ENCODE measurements at regions of chr10 and their contacts with region 1.

Region 1: GRCh38 chr10:48444266-48444665 is 137.8 kb downstream of the MAPK8 start:
- DNase-seq: no peak
- ATAC-seq: peak; percentile 65
- H3K4me3 Mint-ChIP-seq: no peak overlapping the region
- H3K27ac Mint-ChIP-seq: peak overlapping the region; percentile 39
- H3K4me1 Mint-ChIP-seq: peaks cover 20% of the 10 kb centered on the region
- H3K27me3 Mint-ChIP-seq: no peaks in the 10 kb centered on the region
- CTCF ChIP-seq: 0 out of 2 replicates have a peak, but pooled peaks have one; percentile 17

Region 2: GRCh38 chr10:48384699-48384982 is 59.6 kb before region 1 on chr10:
- CTCF ChIA-PET with region 1: interaction called, 16 read pairs
- POLR2A ChIA-PET with region 1: no interaction called
- DNase-seq: no peak
- ATAC-seq: no peak
- H3K4me3 Mint-ChIP-seq: no peak overlapping the region
- H3K27ac Mint-ChIP-seq: peak overlapping the region; percentile 53; the same call in 1 of the 2 replicates
- H3K4me1 Mint-ChIP-seq: peaks cover 19% of the 10 kb centered on the region
- H3K27me3 Mint-ChIP-seq: no peaks in the 10 kb centered on the region; the same call in 1 of the 2 replicates
- CTCF ChIP-seq: no peak

Region 3: DNA sequence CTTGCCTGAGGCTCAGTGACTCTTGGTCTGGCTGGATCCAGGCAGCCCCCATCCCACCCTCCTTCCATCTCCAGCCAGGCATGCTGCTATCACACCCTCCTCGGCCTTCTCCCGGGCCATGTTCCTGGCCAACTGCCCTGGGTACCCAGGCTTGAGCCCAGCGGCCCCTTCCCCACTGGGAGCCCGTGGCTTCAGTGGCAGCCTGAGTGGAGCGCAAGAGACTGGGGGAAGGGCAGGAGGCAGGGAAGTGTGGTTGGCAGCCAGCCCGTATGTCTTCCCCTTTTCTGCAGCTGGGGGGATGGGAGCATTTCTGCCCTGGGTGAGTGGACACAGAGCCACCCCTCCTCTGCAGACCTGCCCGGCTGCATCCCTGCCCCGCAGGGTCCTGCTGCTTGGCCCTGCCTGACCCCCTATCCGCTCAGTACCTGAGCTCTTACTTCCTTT is 12.1 kb after region 1 on chr10:
- CTCF ChIA-PET with region 1: interaction called, 55 read pairs
- POLR2A ChIA-PET with region 1: no interaction called
- DNase-seq: no peak
- ATAC-seq: peak; percentile 23
- H3K4me3 Mint-ChIP-seq: no peak overlapping the region
- H3K27ac Mint-ChIP-seq: no peak overlapping the region
- H3K4me1 Mint-ChIP-seq: peaks cover 13% of the 10 kb centered on the region; the same call in 1 of the 2 replicates
- H3K27me3 Mint-ChIP-seq: no peaks in the 10 kb centered on the region
- CTCF ChIP-seq: no peak

Region 4: GRCh38 chr10:48470115-48470892 is 26.0 kb after region 1 on chr10:
- CTCF ChIA-PET with region 1: interaction called, 34 read pairs
- POLR2A ChIA-PET with region 1: no interaction called
- DNase-seq: no peak
- ATAC-seq: peak; percentile 69
- H3K4me3 Mint-ChIP-seq: no peak overlapping the region
- H3K27ac Mint-ChIP-seq: peak overlapping the region; percentile 23; the same call in 1 of the 2 replicates
- H3K4me1 Mint-ChIP-seq: peaks cover 40% of the 10 kb centered on the region
- H3K27me3 Mint-ChIP-seq: peaks cover 15% of the 10 kb centered on the region
- CTCF ChIP-seq: no peak

Region 5: GRCh38 chr10:48493083-48493871 is 49.0 kb after region 1 on chr10:
- CTCF ChIA-PET with region 1: interaction called, 13 read pairs
- POLR2A ChIA-PET with region 1: no interaction called
- DNase-seq: no peak
- ATAC-seq: no peak
- H3K4me3 Mint-ChIP-seq: no peak overlapping the region
- H3K27ac Mint-ChIP-seq: no peak overlapping the region; the same call in 1 of the 2 replicates
- H3K4me1 Mint-ChIP-seq: peaks cover 13% of the 10 kb centered on the region
- H3K27me3 Mint-ChIP-seq: no peaks in the 10 kb centered on the region
- CTCF ChIP-seq: no peak

Region 6: DNA sequence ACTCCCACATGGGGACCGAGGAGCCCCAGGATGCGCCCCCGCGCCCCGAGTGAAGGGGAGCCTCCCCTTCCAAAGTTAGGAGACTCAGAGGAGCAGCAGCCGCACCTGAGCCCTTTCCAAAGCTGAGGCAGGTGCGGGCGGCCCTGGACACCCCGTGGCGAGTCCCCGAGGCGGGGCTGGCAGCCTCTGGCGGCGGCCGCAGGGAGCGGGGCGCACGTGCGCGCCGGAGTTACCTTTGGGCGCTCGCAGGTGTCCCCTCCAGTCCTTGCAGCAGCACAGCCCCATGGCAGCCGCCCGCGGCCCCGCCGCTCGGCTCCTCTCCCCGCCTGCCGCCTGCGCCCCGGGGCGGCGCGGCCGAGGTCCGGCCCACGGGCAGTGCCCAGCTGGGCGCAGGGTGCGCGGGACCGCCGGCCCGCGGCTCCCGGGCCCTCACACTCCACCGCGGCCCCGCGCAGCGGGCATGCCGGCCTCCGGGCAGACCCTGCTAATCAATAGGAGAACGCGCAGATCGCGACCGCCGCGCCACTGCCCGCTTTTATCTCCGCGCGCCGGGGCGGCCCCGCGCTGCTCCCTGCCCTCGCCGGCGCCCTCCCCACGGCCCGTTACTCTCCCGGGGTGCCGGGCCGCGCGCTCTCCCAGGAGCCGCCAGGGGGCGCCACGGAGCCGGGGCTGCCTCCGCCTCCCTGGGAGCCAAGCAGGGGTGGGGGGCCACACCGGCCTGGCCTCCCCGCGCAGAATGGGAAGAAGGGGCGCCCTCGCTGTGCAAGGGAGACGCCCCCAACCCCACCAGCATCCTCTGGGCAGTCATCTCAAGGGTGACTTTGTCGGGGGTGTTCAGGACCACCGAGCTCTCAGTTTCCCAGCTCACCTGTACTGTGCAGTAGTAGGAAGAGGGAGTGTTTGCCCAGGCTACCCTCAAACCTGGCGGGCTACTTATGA is 79.8 kb after region 1 on chr10:
- CTCF ChIA-PET with region 1: interaction called, 20 read pairs
- POLR2A ChIA-PET with region 1: no interaction called
- DNase-seq: peak; percentile 73
- ATAC-seq: peak; percentile 61
- H3K4me3 Mint-ChIP-seq: peak overlapping the region; percentile 56
- H3K27ac Mint-ChIP-seq: no peak overlapping the region
- H3K4me1 Mint-ChIP-seq: peaks cover 37% of the 10 kb centered on the region
- H3K27me3 Mint-ChIP-seq: peaks cover 11% of the 10 kb centered on the region
- CTCF ChIP-seq: peak; percentile 90

Region 7: DNA sequence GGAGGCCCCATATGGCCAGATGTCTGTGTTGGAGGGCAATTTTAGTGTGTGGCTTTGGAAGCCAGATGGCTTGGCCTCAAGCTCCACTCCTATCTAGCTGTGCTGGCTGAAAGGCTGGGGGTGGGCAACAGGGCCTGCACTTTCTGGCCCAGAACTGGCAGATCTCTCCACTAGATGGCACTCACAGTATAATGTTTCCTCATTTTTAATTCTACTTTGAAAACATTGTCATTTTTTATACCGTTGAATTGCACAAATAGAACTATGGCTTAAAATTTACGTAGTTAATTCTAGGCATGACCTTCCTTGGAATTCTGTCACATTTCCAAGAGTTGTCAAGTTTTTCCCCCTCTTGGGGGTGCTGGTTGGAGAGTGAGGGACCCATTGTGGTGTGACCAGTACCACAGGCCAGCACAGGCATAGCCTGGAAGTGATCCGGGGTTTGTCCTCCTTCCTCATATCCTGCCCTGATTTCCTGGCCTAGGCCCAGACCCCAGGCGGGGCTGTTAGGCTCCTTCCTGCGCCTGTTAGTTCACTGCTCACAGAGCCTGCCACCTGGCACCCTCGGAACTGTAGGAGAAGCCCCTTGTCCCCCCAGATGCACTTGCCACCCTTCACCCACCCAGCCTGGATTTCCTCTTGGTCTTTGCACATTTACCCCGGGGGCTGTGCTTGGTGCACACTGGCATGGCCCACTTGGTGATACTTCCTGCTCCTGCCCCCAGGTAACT is 107.8 kb after region 1 on chr10:
- CTCF ChIA-PET with region 1: interaction called, 22 read pairs
- POLR2A ChIA-PET with region 1: no interaction called
- DNase-seq: peak; percentile 43
- ATAC-seq: peak; percentile 76
- H3K4me3 Mint-ChIP-seq: no peak overlapping the region
- H3K27ac Mint-ChIP-seq: no peak overlapping the region
- H3K4me1 Mint-ChIP-seq: peaks cover 2% of the 10 kb centered on the region; the same call in 1 of the 2 replicates
- H3K27me3 Mint-ChIP-seq: no peaks in the 10 kb centered on the region
- CTCF ChIP-seq: no peak

Region 8: GRCh38 chr10:48765039-48765438 is 320.8 kb after region 1 on chr10:
- CTCF ChIA-PET with region 1: no interaction called
- POLR2A ChIA-PET with region 1: no interaction called
- DNase-seq: no peak
- ATAC-seq: no peak
- H3K4me3 Mint-ChIP-seq: no peak overlapping the region
- H3K27ac Mint-ChIP-seq: no peak overlapping the region
- H3K4me1 Mint-ChIP-seq: peaks cover 13% of the 10 kb centered on the region
- H3K27me3 Mint-ChIP-seq: peaks cover under 1% of the 10 kb centered on the region
- CTCF ChIP-seq: no peak